HepG2 (cell line): ENCODE measurements at regions of chr3 and their contacts with region 1.

Region 1: GRCh38 chr3:31848911-31849310 is 132.2 kb downstream of the OSBPL10 start:
- DNase-seq: peak; percentile 26
- ATAC-seq: peak; percentile 27; the same call in 1 of the 3 replicates
- H3K4me3 ChIP-seq: no peak overlapping the region
- H3K27ac ChIP-seq: peak overlapping the region; percentile 15
- H3K4me1 ChIP-seq: peaks cover 28% of the 10 kb centered on the region
- H3K27me3 ChIP-seq: no peaks in the 10 kb centered on the region
- CTCF ChIP-seq: no peak
- EP300 ChIP-seq: no peak
- POLR2A ChIP-seq: no peak
- RAD21 ChIP-seq: no peak

Region 2: GRCh38 chr3:31836131-31837075 is 12.5 kb before region 1 on chr3:
- CTCF ChIA-PET with region 1: no interaction called
- POLR2A ChIA-PET with region 1: no interaction called
- in situ Hi-C with region 1: no loop called
- intact Hi-C with region 1: loop called (anchors 1 kb)
- DNase-seq: no peak
- ATAC-seq: no peak
- H3K4me3 ChIP-seq: no peak overlapping the region
- H3K27ac ChIP-seq: no peak overlapping the region
- H3K4me1 ChIP-seq: peaks cover 23% of the 10 kb centered on the region
- H3K27me3 ChIP-seq: no peaks in the 10 kb centered on the region
- CTCF ChIP-seq: no peak
- EP300 ChIP-seq: no peak
- POLR2A ChIP-seq: no peak
- RAD21 ChIP-seq: no peak

Region 3: GRCh38 chr3:31981206-31982181 is 132.6 kb after region 1 on chr3 and contains the starts of genes OSBPL10 and ZNF860:
- CTCF ChIA-PET with region 1: no interaction called
- POLR2A ChIA-PET with region 1: no interaction called
- in situ Hi-C with region 1: no loop called
- intact Hi-C with region 1: loop called (anchors 5 kb)
- DNase-seq: peak; percentile 73
- ATAC-seq: peak; percentile 75
- H3K4me3 ChIP-seq: peak within 1 kb of the TSS; percentile 84 to 92 (median 88)
- H3K27ac ChIP-seq: peak within 1 kb of the TSS; percentile 53
- H3K4me1 ChIP-seq: peaks cover 46% of the 10 kb centered on the region
- H3K27me3 ChIP-seq: no peaks in the 10 kb centered on the region; a peak in 1 of 5 replicates
- CTCF ChIP-seq: peak; percentile 41; the same call in 1 of the 2 replicates
- EP300 ChIP-seq: no peak
- POLR2A ChIP-seq: peak in 1 of 2 experiments; percentile 46; a peak in 1 of 4 replicates
- RAD21 ChIP-seq: no peak
- total RNA-seq, gene OSBPL10: 10.3 and 10.4 TPM in 2 replicates
- total RNA-seq, gene ZNF860: 0.55 and 0.66 TPM in 2 replicates